Head of caudate nucleus (tissue), 42 donors: ENCODE measurements at regions of chr2 and their contacts with region 1.

Region 1: DNA sequence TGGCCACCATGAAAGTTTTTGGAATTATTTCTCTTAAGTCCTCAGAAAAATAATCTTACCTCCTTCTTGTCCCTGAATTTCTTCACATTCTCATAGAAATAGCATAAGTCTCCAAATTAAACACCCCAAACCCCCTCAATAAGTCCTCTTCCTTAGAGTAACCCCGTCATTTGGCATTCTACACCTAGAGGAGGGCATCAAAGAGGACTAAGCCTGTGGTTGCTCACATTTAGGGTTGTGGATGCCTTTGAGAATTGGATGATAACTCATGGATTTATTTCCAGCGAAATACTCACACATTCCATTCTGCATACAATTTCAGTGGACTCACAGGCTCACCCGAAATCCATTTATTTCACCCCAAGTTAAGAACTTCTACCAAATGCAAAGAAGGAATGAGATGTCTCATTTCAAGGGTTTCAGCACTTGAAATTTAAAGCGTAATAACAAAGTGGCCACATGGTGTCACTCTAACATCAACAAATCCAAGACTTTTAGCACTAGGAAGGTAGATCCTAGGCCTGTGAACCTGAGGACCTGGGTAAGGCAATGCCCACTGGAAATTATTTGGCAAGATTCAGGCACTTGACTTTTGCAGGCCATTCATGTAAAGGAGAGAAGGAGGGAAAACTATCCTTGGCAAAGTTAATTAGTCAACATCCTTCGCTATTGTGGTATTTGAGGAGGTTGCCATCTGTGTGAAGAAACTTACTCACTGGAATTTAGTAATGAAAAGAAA is 24.6 kb downstream of the DYTN start:
- DNase-seq: peak in 17 of 42 donors; percentile 8 to 77 (median 45)

Region 2: GRCh38 chr2:206756816-206757215 is 63.2 kb after region 1 on chr2:
- intact Hi-C with region 1: no loop called
- DNase-seq: no peak

Region 3: GRCh38 chr2:206783718-206784117 is 90.2 kb after region 1 on chr2:
- intact Hi-C with region 1: loop called (anchors 10 kb)
- DNase-seq: no peak